ENCODE measurements at regions of chr3 and their contacts with region 1.

Region 1: GRCh38 chr3:10142707-10143566 is 1.4 kb downstream of the VHL start:
- DNase-seq: no peak
- ATAC-seq: no peak
- H3K4me3 Mint-ChIP-seq: peak overlapping the region; percentile 83 to 94 (median 92)
- H3K27ac Mint-ChIP-seq: peak overlapping the region; percentile 82 to 98 (median 94)
- H3K4me1 Mint-ChIP-seq: peaks cover 15 to 51% (median 38%) of the 10 kb centered on the region in 4 donors
- H3K27me3 Mint-ChIP-seq: no peaks in the 10 kb centered on the region

Region 2: GRCh38 chr3:10164546-10165393 is 21.8 kb after region 1 on chr3 and contains the start of gene IRAK2:
- POLR2A ChIA-PET with region 1: interaction called, 13 read pairs
- DNase-seq: peak; percentile 11 to 74 (median 60)
- ATAC-seq: peak; percentile 80 to 85
- H3K4me3 Mint-ChIP-seq: peak within 1 kb of the TSS; percentile 71 to 95 (median 84)
- H3K27ac Mint-ChIP-seq: peak within 1 kb of the TSS in 9 of 10 donors; percentile 54 to 86 (median 69)
- H3K4me1 Mint-ChIP-seq: peaks cover 5 to 31% (median 17%) of the 10 kb centered on the region in 4 donors
- H3K27me3 Mint-ChIP-seq: no peaks in the 10 kb centered on the region
- polyA plus RNA-seq, gene IRAK2: 2.9 to 6.0 (median 5.1) TPM

Region 3: DNA sequence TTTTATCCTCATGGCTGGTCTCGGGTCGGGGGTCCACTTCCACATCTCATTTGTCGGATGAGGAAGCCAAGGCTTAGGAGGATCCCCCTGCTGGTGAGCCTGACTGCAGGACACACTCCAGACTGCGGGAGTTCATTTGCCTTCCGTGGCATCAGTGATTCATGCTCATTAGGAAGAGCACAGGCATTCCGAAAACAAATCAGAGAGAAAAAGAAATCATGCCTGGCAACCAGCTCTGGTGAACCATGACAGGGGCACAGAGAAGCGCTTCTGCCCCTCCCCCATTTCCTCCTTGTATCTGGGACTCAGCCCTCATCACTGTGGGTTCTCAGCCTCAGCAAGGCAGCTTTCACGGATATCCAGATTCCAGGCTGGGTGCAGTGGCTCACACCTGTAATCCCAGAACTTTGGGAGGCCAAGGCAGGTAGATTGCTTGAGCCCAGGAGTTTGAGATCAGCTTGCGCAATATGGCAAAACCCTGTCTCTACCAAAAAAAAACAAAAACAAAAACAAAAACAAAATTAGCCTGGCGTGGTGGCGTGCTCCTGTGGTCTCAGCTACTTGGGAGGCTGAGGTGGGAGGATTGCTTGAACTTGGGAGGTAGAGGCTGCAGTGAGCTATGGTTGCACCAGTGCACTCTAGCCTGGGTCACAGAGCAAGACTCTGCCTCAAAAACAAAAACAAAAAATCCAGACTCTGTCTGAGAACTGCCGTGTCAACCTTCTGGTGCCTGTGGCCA is 50.2 kb after region 1 on chr3:
- POLR2A ChIA-PET with region 1: interaction called, 44 read pairs
- DNase-seq: peak; percentile 30 to 83 (median 52)
- ATAC-seq: peak in 1 of 2 donors; percentile 26
- H3K4me3 Mint-ChIP-seq: peak overlapping the region; percentile 74 to 91 (median 83)
- H3K27ac Mint-ChIP-seq: peak overlapping the region; percentile 95 to 99 (median 98)
- H3K4me1 Mint-ChIP-seq: peaks cover 53 to 89% (median 79%) of the 10 kb centered on the region in 4 donors
- H3K27me3 Mint-ChIP-seq: no peaks in the 10 kb centered on the region

Region 4: GRCh38 chr3:10198761-10199649 is 56.1 kb after region 1 on chr3:
- POLR2A ChIA-PET with region 1: interaction called, 44 read pairs
- DNase-seq: peak; percentile 26 to 80 (median 59)
- ATAC-seq: peak; percentile 65 to 70
- H3K4me3 Mint-ChIP-seq: peak overlapping the region; percentile 36 to 87 (median 78)
- H3K27ac Mint-ChIP-seq: peak overlapping the region; percentile 83 to 96 (median 93)
- H3K4me1 Mint-ChIP-seq: peaks cover 31 to 81% (median 60%) of the 10 kb centered on the region in 4 donors
- H3K27me3 Mint-ChIP-seq: no peaks in the 10 kb centered on the region

Region 5: GRCh38 chr3:10248184-10249080 is 105.5 kb after region 1 on chr3 and contains the start of gene TATDN2:
- POLR2A ChIA-PET with region 1: interaction called, 11 read pairs
- DNase-seq: peak; percentile 82 to 96 (median 88)
- ATAC-seq: peak; percentile 91 to 93
- H3K4me3 Mint-ChIP-seq: peak within 1 kb of the TSS; percentile 95 to 100 (median 98)
- H3K27ac Mint-ChIP-seq: peak within 1 kb of the TSS; percentile 93 to 98 (median 96)
- H3K4me1 Mint-ChIP-seq: peaks cover 29 to 56% (median 49%) of the 10 kb centered on the region in 4 donors
- H3K27me3 Mint-ChIP-seq: no peaks in the 10 kb centered on the region
- polyA plus RNA-seq, gene TATDN2: 11.5 to 20.9 (median 14.5) TPM

Measured in naive thymus-derived CD8-positive, alpha-beta T cell (primary cell).